Activated CD4-positive, alpha-beta memory T cell treated with anti-CD3 and anti-CD28 coated beads, Interleukin-2, amount 10 ng/mL, durations not matched to agents 7 days and 5 days (primary cell): ENCODE measurements at regions of chr17 and their contacts with region 1.

Region 1: GRCh38 chr17:65039336-65039988 is 17.1 kb downstream of the GNA13 start:
- DNase-seq: peak; percentile 66
- H3K4me3 Mint-ChIP-seq: peak overlapping the region; percentile 58
- H3K27ac Mint-ChIP-seq: peak overlapping the region; percentile 82
- H3K4me1 Mint-ChIP-seq: peaks cover 84% of the 10 kb centered on the region
- H3K27me3 Mint-ChIP-seq: no peaks in the 10 kb centered on the region

Region 2: DNA sequence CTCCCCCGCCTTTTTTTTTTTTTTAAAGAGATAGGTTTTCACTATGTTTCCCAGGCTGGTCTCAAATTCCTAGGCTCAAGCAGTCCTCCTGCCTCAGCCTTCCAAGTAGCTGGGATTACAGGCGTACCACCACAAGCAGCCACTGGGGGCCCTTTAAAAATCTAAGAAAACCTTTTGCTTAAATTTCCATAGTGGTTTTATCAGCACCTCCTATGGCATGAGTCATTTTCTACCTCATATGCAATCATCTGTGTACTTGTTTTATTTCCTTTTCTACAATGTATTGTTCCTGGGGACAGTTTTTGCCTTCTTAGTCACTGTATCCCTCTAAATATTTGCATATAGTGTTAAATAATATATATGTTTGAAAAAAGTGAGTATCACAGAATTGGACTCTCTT is 12.2 kb before region 1 on chr17:
- CTCF ChIA-PET with region 1: interaction called, 5 read pairs
- POLR2A ChIA-PET with region 1: interaction called, 21 read pairs
- DNase-seq: peak; percentile 59
- H3K4me3 Mint-ChIP-seq: peak overlapping the region; percentile 63
- H3K27ac Mint-ChIP-seq: peak overlapping the region; percentile 85
- H3K4me1 Mint-ChIP-seq: peaks cover 84% of the 10 kb centered on the region
- H3K27me3 Mint-ChIP-seq: no peaks in the 10 kb centered on the region

Region 3: GRCh38 chr17:65055348-65056261 is 16.1 kb after region 1 on chr17:
- CTCF ChIA-PET with region 1: interaction called, 3 read pairs
- POLR2A ChIA-PET with region 1: interaction called, 18 read pairs
- DNase-seq: peak; percentile 57
- H3K4me3 Mint-ChIP-seq: peak overlapping the region; percentile 96
- H3K27ac Mint-ChIP-seq: peak overlapping the region; percentile 91
- H3K4me1 Mint-ChIP-seq: peaks cover 51% of the 10 kb centered on the region
- H3K27me3 Mint-ChIP-seq: peaks cover 2% of the 10 kb centered on the region